Caco-2 (cell line): ENCODE measurements at regions of chr15 and their contacts with region 1.

Region 1: DNA sequence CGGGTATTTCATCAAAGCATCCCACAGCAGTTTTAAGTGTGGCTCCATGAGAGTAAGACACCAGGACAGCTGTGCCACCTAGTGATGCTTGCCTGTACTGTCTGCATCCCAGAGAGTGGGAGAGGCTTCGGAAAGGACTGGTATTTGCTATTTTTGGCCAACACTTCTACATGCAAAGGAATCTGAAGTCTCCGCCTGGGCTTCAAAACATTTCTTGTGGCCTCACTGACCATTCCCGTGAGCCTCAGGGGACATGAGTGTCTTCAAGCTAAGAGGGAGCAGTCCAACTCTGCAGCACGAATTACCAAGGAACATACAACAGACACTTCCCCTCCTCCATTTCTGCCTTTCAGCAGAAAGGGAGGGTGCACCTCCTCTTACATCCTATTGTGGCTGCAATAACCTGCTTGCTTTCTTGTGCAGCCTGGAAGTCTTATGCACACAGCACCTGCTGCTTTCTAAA is 177.5 kb downstream of the RORA start:
- DNase-seq: peak in 1 of 2 experiments; percentile 53
- H3K4me3 ChIP-seq: no peak overlapping the region
- H3K4me3 Mint-ChIP-seq: no peak overlapping the region
- H3K27ac Mint-ChIP-seq: no peak overlapping the region
- H3K4me1 ChIP-seq: no peaks in the 10 kb centered on the region
- H3K4me1 Mint-ChIP-seq: peaks cover 6% of the 10 kb centered on the region
- H3K27me3 ChIP-seq: no peaks in the 10 kb centered on the region
- H3K27me3 Mint-ChIP-seq: no peaks in the 10 kb centered on the region
- CTCF ChIP-seq: peak; percentile 65 to 67

Region 2: DNA sequence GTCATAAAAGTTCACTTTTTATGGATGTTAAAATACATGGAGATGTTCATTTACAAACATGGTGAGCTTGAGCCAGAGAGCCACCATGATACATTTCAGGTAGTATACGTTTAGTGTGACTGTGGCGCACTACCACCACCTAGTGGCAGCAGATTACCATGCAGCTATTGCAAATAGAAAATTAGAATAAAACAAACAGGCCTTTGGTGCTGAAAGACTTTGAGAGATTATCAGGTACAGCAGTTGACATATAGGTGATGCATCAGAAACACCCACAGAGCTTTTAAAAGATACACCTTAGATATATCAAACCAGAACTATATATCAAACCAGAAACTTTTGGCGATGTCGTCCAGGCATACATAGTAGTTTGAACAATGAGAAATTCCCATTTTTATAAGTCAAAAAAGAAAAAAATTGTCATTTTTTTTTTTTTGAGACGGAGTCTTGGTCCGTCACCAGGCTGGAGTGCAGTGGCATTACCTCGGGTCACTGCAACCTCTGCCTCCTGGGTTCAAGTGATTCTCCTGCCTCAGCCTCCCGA is 530.7 kb before region 1 on chr15:
- CTCF ChIA-PET with region 1: no interaction called
- POLR2A ChIA-PET with region 1: no interaction called
- intact Hi-C with region 1: loop called (anchors 10 kb)
- DNase-seq: peak; percentile 60 to 78
- H3K4me3 ChIP-seq: no peak overlapping the region
- H3K4me3 Mint-ChIP-seq: no peak overlapping the region
- H3K27ac Mint-ChIP-seq: no peak overlapping the region
- H3K4me1 ChIP-seq: no peaks in the 10 kb centered on the region
- H3K4me1 Mint-ChIP-seq: peaks cover 11% of the 10 kb centered on the region
- H3K27me3 ChIP-seq: no peaks in the 10 kb centered on the region
- H3K27me3 Mint-ChIP-seq: no peaks in the 10 kb centered on the region
- CTCF ChIP-seq: peak; percentile 83 to 86

Region 3: DNA sequence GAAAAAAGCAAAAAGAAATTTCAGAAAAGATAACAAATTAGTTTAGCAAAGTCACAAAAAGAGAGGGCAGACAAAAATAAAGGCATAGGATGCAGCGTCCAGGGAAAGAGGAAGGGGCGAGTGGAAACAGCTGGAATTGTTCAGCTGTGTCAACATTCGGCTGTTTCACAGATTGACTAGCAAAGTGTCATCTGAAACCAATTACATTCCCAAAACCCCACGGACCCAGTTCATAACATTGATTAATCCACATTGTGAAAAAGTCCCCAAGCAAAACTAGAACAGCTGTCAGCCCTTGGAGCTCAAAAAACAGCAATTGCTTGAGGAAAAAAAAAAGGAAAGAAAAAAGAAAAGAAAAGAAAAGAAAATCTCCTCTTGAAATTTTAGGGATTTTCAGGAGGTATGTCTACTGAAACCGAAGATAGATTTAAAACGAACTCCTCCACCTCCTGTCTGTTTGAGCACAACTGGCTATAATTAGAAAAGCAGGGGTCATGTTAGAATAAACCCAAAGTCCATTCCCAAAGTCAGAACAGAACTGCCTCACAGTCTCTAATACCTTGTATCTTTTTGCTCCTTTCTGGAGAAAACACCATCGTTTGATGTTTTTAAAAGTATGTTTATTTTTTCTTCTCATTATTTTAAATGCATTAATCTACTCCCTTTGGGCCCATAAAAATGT is 17.9 kb after region 1 on chr15:
- CTCF ChIA-PET with region 1: no interaction called
- POLR2A ChIA-PET with region 1: no interaction called
- intact Hi-C with region 1: loop called (anchors 2 kb)
- DNase-seq: no peak
- H3K4me3 ChIP-seq: no peak overlapping the region
- H3K4me3 Mint-ChIP-seq: peak overlapping the region; percentile 3
- H3K27ac Mint-ChIP-seq: no peak overlapping the region
- H3K4me1 ChIP-seq: peaks cover 11% of the 10 kb centered on the region; the same call in 1 of the 2 replicates
- H3K4me1 Mint-ChIP-seq: peaks cover 7% of the 10 kb centered on the region
- H3K27me3 ChIP-seq: no peaks in the 10 kb centered on the region
- H3K27me3 Mint-ChIP-seq: no peaks in the 10 kb centered on the region
- CTCF ChIP-seq: no peak

Region 4: DNA sequence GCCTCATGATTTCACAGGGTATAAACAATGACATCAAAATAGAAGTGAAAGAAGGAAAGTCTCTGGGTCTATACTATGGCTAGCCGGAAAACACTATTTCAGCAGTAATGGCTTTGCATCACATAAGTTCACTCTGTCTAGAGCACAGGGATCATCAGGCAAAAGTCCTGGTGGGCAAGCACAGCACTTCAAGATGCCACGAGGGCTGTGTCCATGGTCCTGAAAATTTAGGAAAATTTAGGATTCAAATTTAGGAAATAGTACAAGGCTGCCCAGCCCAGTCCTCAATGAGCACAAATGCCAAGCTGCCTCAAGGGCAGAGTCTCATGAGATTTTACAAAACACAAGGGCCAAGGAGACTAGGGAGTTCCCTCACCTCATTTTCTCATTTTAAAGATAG is 123.4 kb after region 1 on chr15:
- CTCF ChIA-PET with region 1: no interaction called
- POLR2A ChIA-PET with region 1: no interaction called
- intact Hi-C with region 1: no loop called
- DNase-seq: peak in 1 of 2 experiments; percentile 2
- H3K4me3 ChIP-seq: no peak overlapping the region
- H3K4me3 Mint-ChIP-seq: no peak overlapping the region
- H3K27ac Mint-ChIP-seq: no peak overlapping the region
- H3K4me1 ChIP-seq: no peaks in the 10 kb centered on the region
- H3K4me1 Mint-ChIP-seq: no peaks in the 10 kb centered on the region
- H3K27me3 ChIP-seq: no peaks in the 10 kb centered on the region
- H3K27me3 Mint-ChIP-seq: peaks cover 12% of the 10 kb centered on the region
- CTCF ChIP-seq: no peak